ENCODE measurements at regions of chr2 and their contacts with region 1.

Region 1: GRCh38 chr2:154350911-154351310 is 347.6 kb upstream of the KCNJ3 start:
- DNase-seq: no peak
- H3K4me3 ChIP-seq: no peak overlapping the region
- H3K27ac ChIP-seq: no peak overlapping the region
- H3K4me1 ChIP-seq: no peaks in the 10 kb centered on the region
- H3K27me3 ChIP-seq: no peaks in the 10 kb centered on the region
- CTCF ChIP-seq: no peak
- POLR2A ChIP-seq: no peak

Region 2: GRCh38 chr2:154306266-154306970 is 44.5 kb before region 1 on chr2:
- intact Hi-C with region 1: no loop called
- DNase-seq: no peak
- H3K4me3 ChIP-seq: no peak overlapping the region
- H3K27ac ChIP-seq: no peak overlapping the region
- H3K4me1 ChIP-seq: no peaks in the 10 kb centered on the region
- H3K27me3 ChIP-seq: no peaks in the 10 kb centered on the region
- CTCF ChIP-seq: no peak
- POLR2A ChIP-seq: no peak

Region 3: GRCh38 chr2:154466226-154466625 is 115.3 kb after region 1 on chr2:
- intact Hi-C with region 1: loop called (anchors 5 kb)
- DNase-seq: no peak
- H3K4me3 ChIP-seq: no peak overlapping the region
- H3K27ac ChIP-seq: no peak overlapping the region
- H3K4me1 ChIP-seq: no peaks in the 10 kb centered on the region
- H3K27me3 ChIP-seq: no peaks in the 10 kb centered on the region
- CTCF ChIP-seq: no peak
- POLR2A ChIP-seq: no peak

Region 4: GRCh38 chr2:154527962-154528361 is 177.1 kb after region 1 on chr2:
- intact Hi-C with region 1: no loop called
- DNase-seq: no peak
- H3K4me3 ChIP-seq: no peak overlapping the region
- H3K27ac ChIP-seq: no peak overlapping the region
- H3K4me1 ChIP-seq: no peaks in the 10 kb centered on the region
- H3K27me3 ChIP-seq: no peaks in the 10 kb centered on the region
- CTCF ChIP-seq: no peak
- POLR2A ChIP-seq: no peak